Caco-2 (cell line): ENCODE measurements at regions of chr5 and their contacts with region 1.

Region 1: GRCh38 chr5:170117736-170118135 is 12.0 kb downstream of the FOXI1 start:
- DNase-seq: no peak
- H3K4me3 ChIP-seq: no peak overlapping the region
- H3K4me3 Mint-ChIP-seq: no peak overlapping the region
- H3K27ac Mint-ChIP-seq: no peak overlapping the region
- H3K4me1 ChIP-seq: no peaks in the 10 kb centered on the region
- H3K4me1 Mint-ChIP-seq: no peaks in the 10 kb centered on the region
- H3K27me3 ChIP-seq: no peaks in the 10 kb centered on the region
- H3K27me3 Mint-ChIP-seq: peaks cover 17% of the 10 kb centered on the region
- CTCF ChIP-seq: no peak

Region 2: GRCh38 chr5:170132269-170132975 is 14.7 kb after region 1 on chr5:
- CTCF ChIA-PET with region 1: no interaction called
- POLR2A ChIA-PET with region 1: no interaction called
- intact Hi-C with region 1: no loop called
- DNase-seq: no peak
- H3K4me3 ChIP-seq: no peak overlapping the region
- H3K4me3 Mint-ChIP-seq: no peak overlapping the region
- H3K27ac Mint-ChIP-seq: no peak overlapping the region
- H3K4me1 ChIP-seq: no peaks in the 10 kb centered on the region
- H3K4me1 Mint-ChIP-seq: no peaks in the 10 kb centered on the region
- H3K27me3 ChIP-seq: no peaks in the 10 kb centered on the region
- H3K27me3 Mint-ChIP-seq: peaks cover 24% of the 10 kb centered on the region
- CTCF ChIP-seq: no peak

Region 3: GRCh38 chr5:170151097-170151831 is 33.5 kb after region 1 on chr5:
- CTCF ChIA-PET with region 1: no interaction called
- POLR2A ChIA-PET with region 1: no interaction called
- intact Hi-C with region 1: loop called (anchors 5 kb)
- DNase-seq: peak; percentile 69 to 83
- H3K4me3 ChIP-seq: no peak overlapping the region
- H3K4me3 Mint-ChIP-seq: peak overlapping the region; percentile 18
- H3K27ac Mint-ChIP-seq: peak overlapping the region; percentile 77
- H3K4me1 ChIP-seq: peaks cover 21% of the 10 kb centered on the region
- H3K4me1 Mint-ChIP-seq: peaks cover 9% of the 10 kb centered on the region
- H3K27me3 ChIP-seq: no peaks in the 10 kb centered on the region
- H3K27me3 Mint-ChIP-seq: peaks cover 4% of the 10 kb centered on the region
- CTCF ChIP-seq: no peak